Lower leg skin (tissue), 4 donors: ENCODE measurements at regions of chr22 and their contacts with region 1.

Region 1: GRCh38 chr22:36180038-36180880 is 19.7 kb upstream of the APOL3 start:
- DNase-seq: peak; percentile 75 to 97
- H3K4me3 ChIP-seq: no peak overlapping the region
- CTCF ChIP-seq: no peak
- POLR2A ChIP-seq: no peak

Region 2: DNA sequence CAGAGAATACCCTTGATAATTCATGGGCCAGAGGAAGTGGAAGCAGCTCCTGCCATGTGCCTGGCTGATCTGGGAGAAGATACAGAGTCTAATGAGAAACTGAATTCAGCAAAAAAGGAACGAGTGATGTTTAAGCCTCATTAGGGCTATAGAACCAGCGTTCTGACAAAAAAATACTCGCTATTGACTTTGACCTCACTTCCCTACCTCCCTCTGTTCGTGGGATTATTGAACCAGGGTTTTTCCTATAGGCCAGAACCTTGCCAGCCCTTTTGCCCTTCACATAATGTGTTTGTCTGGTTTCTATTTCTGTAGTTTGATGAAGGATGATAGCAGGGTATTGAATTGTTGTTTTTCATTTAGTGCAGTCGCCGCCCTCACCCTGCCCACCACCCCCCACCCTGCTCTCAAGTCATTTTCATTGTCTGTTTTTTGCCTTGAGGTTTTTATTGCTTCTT is 144.1 kb before region 1 on chr22:
- intact Hi-C with region 1: no loop called
- DNase-seq: no peak
- H3K4me3 ChIP-seq: no peak overlapping the region
- CTCF ChIP-seq: no peak
- POLR2A ChIP-seq: no peak

Region 3: DNA sequence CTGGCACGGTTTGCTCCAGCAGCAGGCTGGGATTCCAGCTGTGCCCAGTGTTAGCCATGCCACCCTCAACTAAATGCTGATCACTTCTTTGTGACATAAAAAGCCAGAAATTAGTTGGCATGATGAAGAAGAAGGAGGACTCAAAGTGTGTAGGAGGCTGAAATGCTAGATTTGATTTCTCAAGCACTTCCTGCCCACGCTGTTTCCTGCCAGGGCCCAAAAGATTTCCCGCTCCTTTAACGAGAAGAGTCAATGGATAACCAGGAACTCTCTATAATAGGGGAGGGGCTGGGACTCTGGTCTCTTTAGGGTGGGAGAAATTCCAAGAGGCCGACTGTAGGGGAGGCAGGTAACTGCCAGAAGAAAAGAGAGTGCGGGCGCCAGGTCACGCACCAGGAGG is 46.1 kb before region 1 on chr22:
- intact Hi-C with region 1: no loop called
- DNase-seq: no peak
- H3K4me3 ChIP-seq: no peak overlapping the region
- CTCF ChIP-seq: no peak
- POLR2A ChIP-seq: no peak

Region 4: DNA sequence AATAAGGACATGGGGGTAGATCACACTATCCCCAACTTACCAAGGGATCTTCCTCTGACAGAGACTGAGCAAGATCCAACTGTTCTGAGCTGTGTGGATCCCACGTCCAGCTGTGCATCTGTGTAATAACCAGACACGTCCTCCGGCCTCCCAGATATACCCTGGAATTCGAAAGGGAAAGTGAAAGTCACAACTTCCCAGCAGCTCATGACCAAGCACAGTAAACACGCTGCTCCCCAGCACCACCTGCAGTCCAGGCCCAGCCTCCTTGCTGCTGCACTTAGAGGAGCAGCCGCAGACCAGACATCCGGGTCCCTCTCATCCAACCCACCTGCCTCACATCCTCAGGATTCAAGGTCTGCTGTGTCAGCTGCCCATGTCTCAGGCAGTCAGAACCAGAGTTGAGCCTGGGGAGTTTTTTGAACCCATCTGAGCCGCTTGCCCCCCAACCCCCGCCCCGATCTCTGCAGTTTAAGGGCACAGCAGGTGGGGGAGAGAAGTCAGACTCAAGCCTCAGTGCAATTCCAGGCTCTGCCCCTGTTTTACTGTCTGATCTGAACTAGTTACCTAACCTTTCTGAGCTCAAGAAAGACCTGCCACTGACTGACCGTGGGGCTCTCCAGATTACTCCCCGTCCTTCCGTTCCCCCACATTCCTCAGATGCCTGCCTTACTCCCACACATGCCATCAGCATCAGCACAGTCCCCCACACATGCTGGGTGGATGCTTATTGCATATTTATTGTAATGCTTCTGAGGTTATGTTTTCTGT is 59.3 kb after region 1 on chr22 and contains the start of gene APOL2:
- intact Hi-C with region 1: loop called (anchors 10 kb)
- DNase-seq: peak; percentile 89 to 96
- H3K4me3 ChIP-seq: peak within 1 kb of the TSS; percentile 60
- CTCF ChIP-seq: peak in 1 of 3 donors; percentile 78
- POLR2A ChIP-seq: no peak
- total RNA-seq, gene APOL2: 14.2 to 24.8 (median 20.0) TPM

Region 5: GRCh38 chr22:36753120-36753802 is 573.0 kb after region 1 on chr22:
- intact Hi-C with region 1: no loop called
- DNase-seq: peak in 1 of 2 donors; percentile 37
- H3K4me3 ChIP-seq: no peak overlapping the region
- CTCF ChIP-seq: no peak
- POLR2A ChIP-seq: no peak